ENCODE measurements at regions of chr3 and their contacts with region 1.

Region 1: DNA sequence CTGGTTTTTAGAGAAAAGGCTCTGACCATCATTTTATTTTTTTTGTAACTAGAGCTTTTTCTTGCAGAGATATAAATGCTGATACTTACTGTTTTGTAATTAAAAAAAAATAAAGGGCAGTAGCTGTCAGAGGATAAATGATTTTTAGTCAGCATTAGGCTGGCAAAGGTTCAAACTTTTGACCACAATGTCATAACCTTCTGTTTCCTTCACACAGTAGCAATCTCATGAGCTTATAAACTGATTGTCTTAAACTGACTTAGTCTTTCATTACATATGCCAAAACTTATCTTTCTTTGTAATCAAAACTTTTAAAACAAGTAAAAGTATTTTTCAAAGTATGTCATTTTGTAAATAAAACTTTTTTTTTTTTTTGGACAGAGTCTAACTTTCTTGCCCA is 841.9 kb downstream of the OTOL1 start:
- DNase-seq: no peak
- H3K4me3 ChIP-seq: no peak overlapping the region
- H3K27me3 ChIP-seq: peaks cover 1% of the 10 kb centered on the region; the same call in 1 of the 2 replicates
- CTCF ChIP-seq: no peak

Region 2: DNA sequence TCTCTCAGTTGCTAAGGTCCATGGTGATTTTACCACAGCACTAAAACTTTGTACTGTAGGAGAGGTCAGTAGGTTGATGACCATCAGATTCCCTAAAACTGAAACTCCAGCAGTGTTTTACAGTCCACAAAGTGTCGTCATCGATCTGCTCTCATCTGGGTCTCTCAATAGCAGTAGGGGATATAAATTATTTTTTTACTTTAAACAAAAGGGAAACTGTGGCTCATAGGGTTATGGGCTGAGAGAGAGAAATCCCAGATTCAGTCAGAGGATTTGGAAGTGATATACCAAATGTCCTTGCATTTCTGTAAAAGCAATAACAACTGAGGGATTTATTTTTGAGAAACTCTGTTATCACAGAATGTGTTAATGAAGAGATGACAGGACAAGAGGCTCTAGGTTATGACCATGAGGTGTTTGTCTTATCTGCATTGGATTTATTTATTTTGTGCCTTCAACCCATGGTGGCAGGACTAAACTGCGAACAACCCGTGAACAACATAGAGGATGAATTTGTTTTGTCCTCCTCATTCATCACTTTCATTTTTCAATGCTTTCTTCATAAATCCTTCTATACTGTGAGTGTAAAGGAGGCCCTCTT is 27.7 kb after region 1 on chr3:
- CTCF ChIA-PET with region 1: no interaction called
- POLR2A ChIA-PET with region 1: interaction called, 10 read pairs
- DNase-seq: no peak
- H3K4me3 ChIP-seq: no peak overlapping the region
- H3K27me3 ChIP-seq: no peaks in the 10 kb centered on the region
- CTCF ChIP-seq: no peak

Region 3: DNA sequence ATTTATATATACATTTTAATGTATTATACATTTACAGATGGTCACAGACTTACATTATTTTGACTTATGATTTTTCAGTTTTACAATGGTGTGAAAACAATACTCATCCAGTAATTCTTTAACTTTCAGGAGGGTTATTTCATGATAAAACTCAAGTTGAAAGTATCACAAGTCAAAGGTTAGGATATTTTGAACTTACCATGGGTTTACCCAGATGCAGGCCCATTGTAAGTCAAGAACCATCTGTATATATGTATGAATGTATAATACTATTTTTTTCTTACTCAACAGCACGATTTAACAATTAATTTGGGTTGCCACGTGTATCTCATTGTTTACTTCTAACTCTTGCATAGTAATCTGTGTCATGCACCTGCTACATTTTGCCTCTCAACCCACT is 160.1 kb after region 1 on chr3:
- CTCF ChIA-PET with region 1: no interaction called
- POLR2A ChIA-PET with region 1: no interaction called
- DNase-seq: no peak
- H3K4me3 ChIP-seq: no peak overlapping the region
- H3K27me3 ChIP-seq: no peaks in the 10 kb centered on the region
- CTCF ChIP-seq: no peak